Naive thymus-derived CD8-positive, alpha-beta T cell (primary cell): ENCODE measurements at regions of chr2 and their contacts with region 1.

Region 1: DNA sequence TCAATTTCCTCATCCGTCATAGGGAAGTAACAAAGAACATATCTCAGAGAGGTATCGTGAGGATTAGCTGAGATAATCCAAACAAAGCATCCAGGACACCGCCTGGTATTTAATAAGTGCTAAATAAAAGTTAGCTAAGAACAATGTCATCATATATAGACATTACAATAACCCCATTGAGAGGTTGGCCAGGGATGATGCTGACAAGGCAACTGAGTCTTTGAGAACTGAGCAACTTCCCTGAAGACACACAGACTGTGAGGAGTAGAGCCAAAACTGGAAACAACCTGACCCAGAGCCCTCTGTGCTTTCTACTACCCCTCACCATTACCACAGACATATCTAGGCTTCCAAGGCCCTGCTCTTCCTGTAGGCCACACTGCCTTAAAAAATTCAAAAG is 1.6 kb upstream of the DCTN1 start:
- DNase-seq: no peak
- ATAC-seq: no peak
- H3K4me3 Mint-ChIP-seq: peak overlapping the region in 4 of 10 donors; percentile 23 to 40 (median 27)
- H3K27ac Mint-ChIP-seq: peak overlapping the region in 6 of 10 donors; percentile 3 to 65 (median 48)
- H3K4me1 Mint-ChIP-seq: peaks cover 37 to 62% (median 43%) of the 10 kb centered on the region in 4 donors
- H3K27me3 Mint-ChIP-seq: no peaks in the 10 kb centered on the region

Region 2: GRCh38 chr2:74399785-74400184 is 18.0 kb after region 1 on chr2:
- POLR2A ChIA-PET with region 1: interaction called, 11 read pairs
- DNase-seq: peak in 3 of 10 donors; percentile 40 to 45 (median 42)
- ATAC-seq: peak; percentile 74 to 75
- H3K4me3 Mint-ChIP-seq: no peak overlapping the region
- H3K27ac Mint-ChIP-seq: peak overlapping the region in 2 of 10 donors; percentile 2 to 11
- H3K4me1 Mint-ChIP-seq: peaks cover 0 to 7% (median 2%) of the 10 kb centered on the region in 4 donors
- H3K27me3 Mint-ChIP-seq: peaks cover 0 to 3% (median 0%) of the 10 kb centered on the region in 5 donors